Head of caudate nucleus (tissue), 42 donors: ENCODE measurements at regions of chrX and their contacts with region 1.

Region 1: GRCh38 chrX:154378782-154379591 is at the start of gene EMD:
- DNase-seq: peak; percentile 92 to 99 (median 96)

Region 2: DNA sequence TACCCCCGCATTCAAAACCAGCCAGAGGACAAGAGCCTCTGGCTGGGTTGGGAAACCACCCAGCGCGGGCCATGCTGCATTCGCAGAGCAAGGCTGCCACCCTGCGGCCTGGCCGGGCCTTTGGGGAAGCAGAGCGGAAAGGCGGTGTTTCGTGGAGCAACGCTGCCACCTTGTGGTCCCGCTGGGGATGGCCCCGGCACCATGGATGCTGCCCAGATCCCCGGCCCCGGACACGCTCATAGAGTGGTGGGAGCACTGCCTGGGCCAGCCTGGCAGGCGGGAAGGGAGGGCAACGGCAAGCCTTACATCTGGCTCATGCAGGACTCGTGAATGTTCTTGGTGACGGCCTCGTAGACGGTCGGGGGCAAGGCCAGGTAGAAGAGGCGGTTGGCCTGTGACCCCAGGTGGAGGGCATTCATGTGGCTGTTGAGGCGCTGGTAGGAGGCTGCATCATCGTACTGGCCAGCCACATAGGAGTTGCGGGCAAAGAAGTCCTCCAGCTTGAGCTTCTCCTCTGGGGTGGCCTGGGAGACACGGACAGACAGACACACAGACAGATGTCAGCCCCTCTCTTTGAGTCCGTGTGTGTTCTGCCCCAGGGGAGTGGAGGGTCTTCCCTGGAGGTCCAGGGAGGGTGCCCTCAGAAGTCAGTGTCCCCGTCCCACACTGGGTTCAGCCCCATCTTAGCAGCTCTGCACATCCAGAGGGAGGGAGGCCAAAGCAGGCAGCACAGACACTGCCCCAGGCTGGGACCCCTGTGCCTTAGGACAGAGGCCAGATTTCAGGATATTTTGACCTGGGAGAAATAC is 156.1 kb after region 1 on chrX:
- intact Hi-C with region 1: loop called (anchors 10 kb)
- DNase-seq: peak; percentile 71 to 95 (median 90)